Ovary (tissue), 10 donors: ENCODE measurements at regions of chr1 and their contacts with region 1.

Region 1: GRCh38 chr1:228387321-228387720 is 19.3 kb downstream of the TRIM11 start:
- DNase-seq: peak in 1 of 5 donors; percentile 1
- H3K4me3 ChIP-seq: no peak overlapping the region
- H3K27ac ChIP-seq: no peak overlapping the region
- H3K4me1 ChIP-seq: no peaks in the 10 kb centered on the region
- H3K27me3 ChIP-seq: no peaks in the 10 kb centered on the region
- CTCF ChIP-seq: no peak
- EP300 ChIP-seq: no peak
- POLR2A ChIP-seq: no peak

Region 2: GRCh38 chr1:228306275-228307217 is 80.8 kb before region 1 on chr1:
- intact Hi-C with region 1: no loop called
- DNase-seq: peak in 4 of 5 donors; percentile 10 to 28 (median 14)
- H3K4me3 ChIP-seq: no peak overlapping the region
- H3K27ac ChIP-seq: no peak overlapping the region
- H3K4me1 ChIP-seq: no peaks in the 10 kb centered on the region
- H3K27me3 ChIP-seq: no peaks in the 10 kb centered on the region
- CTCF ChIP-seq: no peak
- EP300 ChIP-seq: no peak
- POLR2A ChIP-seq: no peak

Region 3: DNA sequence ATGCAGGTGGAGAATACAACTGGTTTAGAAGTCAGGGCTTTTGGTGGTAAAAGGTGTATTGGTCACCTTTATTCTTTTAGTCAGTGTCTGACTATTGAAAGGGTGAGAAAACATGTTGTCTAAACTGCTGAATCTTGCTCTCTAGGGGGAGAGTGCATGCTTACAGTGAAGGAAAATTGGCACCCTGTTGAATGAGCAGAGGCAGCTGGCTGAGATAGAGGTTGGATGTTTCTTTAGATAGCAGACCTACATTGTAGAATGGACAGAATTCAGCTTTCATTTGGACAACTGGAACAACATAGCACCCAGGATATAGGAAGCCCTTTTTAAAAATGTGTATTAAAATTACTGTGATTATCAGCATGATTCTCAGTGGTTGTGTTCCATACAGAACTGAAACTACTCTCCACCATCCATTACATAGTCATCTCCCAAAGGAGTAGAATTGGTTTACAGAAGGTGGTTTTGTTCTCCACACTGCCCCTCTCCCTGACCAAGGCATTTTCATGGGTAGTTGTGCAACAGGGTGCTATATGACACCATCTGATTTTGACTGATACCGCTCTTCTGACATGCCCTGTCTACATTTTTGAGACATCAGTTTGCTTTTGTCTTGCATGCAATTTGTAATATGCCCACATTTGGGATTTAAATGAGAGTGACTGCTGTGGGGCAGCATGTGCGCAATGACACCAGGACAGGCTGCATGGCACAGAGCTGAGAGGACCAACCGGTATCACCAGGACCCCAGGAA is 364.2 kb after region 1 on chr1:
- intact Hi-C with region 1: loop called in 1 of 4 experiments (anchors 5 kb)
- DNase-seq: no peak
- H3K4me3 ChIP-seq: no peak overlapping the region
- H3K27ac ChIP-seq: no peak overlapping the region
- H3K4me1 ChIP-seq: no peaks in the 10 kb centered on the region
- H3K27me3 ChIP-seq: no peaks in the 10 kb centered on the region
- CTCF ChIP-seq: no peak
- EP300 ChIP-seq: no peak
- POLR2A ChIP-seq: no peak